ENCODE measurements at regions of chr4 and their contacts with region 1.

Region 1: GRCh38 chr4:27123123-27123768 is 262.6 kb downstream of the STIM2 start:
- DNase-seq: peak; percentile 34
- ATAC-seq: peak; percentile 87
- H3K4me3 Mint-ChIP-seq: peak overlapping the region; percentile 40
- H3K27ac Mint-ChIP-seq: peak overlapping the region; percentile 99
- H3K4me1 Mint-ChIP-seq: peaks cover 71% of the 10 kb centered on the region
- H3K27me3 Mint-ChIP-seq: peaks cover 3% of the 10 kb centered on the region; the same call in 1 of the 2 replicates
- CTCF ChIP-seq: no peak

Region 2: GRCh38 chr4:27040356-27040755 is 82.9 kb before region 1 on chr4:
- CTCF ChIA-PET with region 1: no interaction called
- POLR2A ChIA-PET with region 1: no interaction called
- DNase-seq: no peak
- ATAC-seq: no peak
- H3K4me3 Mint-ChIP-seq: no peak overlapping the region
- H3K27ac Mint-ChIP-seq: no peak overlapping the region
- H3K4me1 Mint-ChIP-seq: no peaks in the 10 kb centered on the region
- H3K27me3 Mint-ChIP-seq: no peaks in the 10 kb centered on the region
- CTCF ChIP-seq: no peak

Region 3: DNA sequence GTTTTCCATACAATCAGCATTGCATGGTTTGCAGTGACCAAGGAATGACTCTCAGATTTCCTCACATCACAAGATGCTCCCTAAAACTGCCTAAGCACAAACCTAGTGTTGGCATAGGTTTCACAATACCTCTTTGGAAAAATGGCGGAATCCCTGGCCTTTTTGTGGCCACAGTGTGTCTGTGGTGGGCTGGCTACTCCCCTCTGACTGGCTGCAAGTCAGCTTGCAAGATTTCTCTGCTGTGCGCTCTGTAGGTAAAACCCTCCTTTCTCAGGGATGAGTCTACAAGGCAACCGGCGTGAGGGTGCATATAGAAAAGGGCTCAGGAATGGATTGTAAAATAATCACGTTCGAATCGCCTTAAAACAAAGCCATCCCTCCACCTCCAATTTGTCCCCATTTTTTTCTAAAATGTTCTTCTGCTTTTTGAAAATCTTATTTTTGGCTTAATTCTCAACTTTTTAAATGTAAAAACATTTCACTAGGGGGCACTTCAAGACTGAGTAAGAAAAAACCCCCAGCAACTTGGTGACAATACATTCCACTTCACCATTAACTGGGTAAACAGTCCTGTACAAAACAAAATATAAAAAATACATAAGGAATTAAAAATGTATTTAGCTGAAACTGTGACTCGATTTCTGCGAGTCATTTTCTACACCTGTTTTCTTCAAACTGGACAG is 27.0 kb before region 1 on chr4:
- CTCF ChIA-PET with region 1: interaction called, 14 read pairs
- POLR2A ChIA-PET with region 1: no interaction called
- DNase-seq: peak; percentile 18
- ATAC-seq: peak; percentile 67
- H3K4me3 Mint-ChIP-seq: no peak overlapping the region; the same call in 1 of the 2 replicates
- H3K27ac Mint-ChIP-seq: peak overlapping the region; percentile 74
- H3K4me1 Mint-ChIP-seq: peaks cover 62% of the 10 kb centered on the region
- H3K27me3 Mint-ChIP-seq: peaks cover 6% of the 10 kb centered on the region
- CTCF ChIP-seq: no peak; the same call in 1 of the 2 replicates

Measured in WTC11 (cell line).